Dendritic cell treated with granulocyte-macrophage colony-stimulating factor and Interleukin-4, amounts not matched to agents 40 ng/mL and 50 ng/mL, for 4 days (primary cell): ENCODE measurements at regions of chr11 and their contacts with region 1.

Region 1: DNA sequence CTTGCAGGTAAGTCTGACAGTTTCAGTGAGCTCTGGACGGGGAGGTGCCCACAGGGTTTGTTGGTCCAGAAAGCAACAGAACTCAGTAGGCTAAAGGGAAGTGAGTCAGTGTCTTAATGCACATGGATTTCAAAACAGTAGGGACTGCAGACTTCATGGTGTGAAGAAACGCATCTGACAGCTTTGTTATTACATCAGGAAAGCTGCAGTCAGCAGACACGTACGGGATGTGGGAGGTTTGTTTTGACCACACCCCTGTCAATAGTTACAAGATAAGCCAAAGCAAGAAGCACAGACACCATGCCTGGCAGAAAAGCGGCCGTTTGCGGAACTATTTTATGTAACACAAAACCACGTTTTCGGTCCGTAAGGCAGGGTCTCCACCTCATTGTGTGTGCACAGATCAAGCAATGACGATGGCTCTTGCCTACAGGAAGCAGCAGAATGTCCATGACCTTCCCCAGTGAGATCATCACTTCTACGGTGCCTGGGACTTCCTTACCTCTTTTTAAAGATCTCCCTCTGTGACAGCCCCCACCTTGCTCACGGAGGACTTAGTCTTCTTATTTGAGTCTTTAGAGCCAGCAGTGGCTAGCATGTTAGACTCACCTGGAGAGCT is 58.2 kb upstream of the FTH1 start:
- H3K4me3 Mint-ChIP-seq: peak overlapping the region; percentile 26
- H3K27ac Mint-ChIP-seq: peak overlapping the region; percentile 91
- H3K4me1 Mint-ChIP-seq: peaks cover 43% of the 10 kb centered on the region
- H3K27me3 Mint-ChIP-seq: no peaks in the 10 kb centered on the region

Region 2: DNA sequence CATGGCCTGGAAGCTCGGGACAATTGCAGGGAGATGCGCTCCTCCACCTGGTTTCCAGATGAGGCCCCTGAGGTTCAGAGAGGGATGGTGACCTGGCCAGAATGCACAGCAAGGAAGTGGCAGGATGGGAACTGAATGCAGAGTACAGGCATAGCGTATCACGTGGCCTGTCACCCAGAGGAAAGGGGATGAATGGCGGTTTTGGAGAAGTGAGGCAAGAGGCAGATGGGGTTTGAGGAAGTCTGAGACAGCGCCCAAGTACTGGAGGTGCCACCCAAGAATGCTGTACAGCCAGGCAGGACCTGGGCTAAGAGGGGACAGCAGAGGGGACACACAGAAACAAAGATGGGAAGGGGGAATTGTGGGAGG is 113.1 kb before region 1 on chr11:
- intact Hi-C with region 1: no loop called
- H3K4me3 Mint-ChIP-seq: peak overlapping the region; percentile 55
- H3K27ac Mint-ChIP-seq: peak overlapping the region; percentile 85
- H3K4me1 Mint-ChIP-seq: peaks cover 74% of the 10 kb centered on the region
- H3K27me3 Mint-ChIP-seq: peaks cover 46% of the 10 kb centered on the region

Region 3: GRCh38 chr11:61971248-61972111 is 54.1 kb before region 1 on chr11:
- intact Hi-C with region 1: loop called (anchors 1 kb)
- H3K4me3 Mint-ChIP-seq: peak overlapping the region; percentile 56
- H3K27ac Mint-ChIP-seq: peak overlapping the region; percentile 99
- H3K4me1 Mint-ChIP-seq: peaks cover 81% of the 10 kb centered on the region
- H3K27me3 Mint-ChIP-seq: no peaks in the 10 kb centered on the region

Region 4: GRCh38 chr11:62004473-62004872 is 21.1 kb before region 1 on chr11:
- intact Hi-C with region 1: loop called (anchors 2 kb)
- H3K4me3 Mint-ChIP-seq: no peak overlapping the region
- H3K27ac Mint-ChIP-seq: peak overlapping the region; percentile 91
- H3K4me1 Mint-ChIP-seq: peaks cover 42% of the 10 kb centered on the region
- H3K27me3 Mint-ChIP-seq: no peaks in the 10 kb centered on the region